ENCODE measurements at regions of chr15 and their contacts with region 1.

Region 1: GRCh38 chr15:92808978-92809879 is 90.9 kb upstream of the CHD2 start:
- DNase-seq: peak; percentile 100
- ATAC-seq: peak; percentile 90

Region 2: GRCh38 chr15:92881802-92882696 is 72.8 kb after region 1 on chr15:
- intact Hi-C with region 1: loop called (anchors 5 kb)
- DNase-seq: peak; percentile 98
- ATAC-seq: peak; percentile 96

Region 3: DNA sequence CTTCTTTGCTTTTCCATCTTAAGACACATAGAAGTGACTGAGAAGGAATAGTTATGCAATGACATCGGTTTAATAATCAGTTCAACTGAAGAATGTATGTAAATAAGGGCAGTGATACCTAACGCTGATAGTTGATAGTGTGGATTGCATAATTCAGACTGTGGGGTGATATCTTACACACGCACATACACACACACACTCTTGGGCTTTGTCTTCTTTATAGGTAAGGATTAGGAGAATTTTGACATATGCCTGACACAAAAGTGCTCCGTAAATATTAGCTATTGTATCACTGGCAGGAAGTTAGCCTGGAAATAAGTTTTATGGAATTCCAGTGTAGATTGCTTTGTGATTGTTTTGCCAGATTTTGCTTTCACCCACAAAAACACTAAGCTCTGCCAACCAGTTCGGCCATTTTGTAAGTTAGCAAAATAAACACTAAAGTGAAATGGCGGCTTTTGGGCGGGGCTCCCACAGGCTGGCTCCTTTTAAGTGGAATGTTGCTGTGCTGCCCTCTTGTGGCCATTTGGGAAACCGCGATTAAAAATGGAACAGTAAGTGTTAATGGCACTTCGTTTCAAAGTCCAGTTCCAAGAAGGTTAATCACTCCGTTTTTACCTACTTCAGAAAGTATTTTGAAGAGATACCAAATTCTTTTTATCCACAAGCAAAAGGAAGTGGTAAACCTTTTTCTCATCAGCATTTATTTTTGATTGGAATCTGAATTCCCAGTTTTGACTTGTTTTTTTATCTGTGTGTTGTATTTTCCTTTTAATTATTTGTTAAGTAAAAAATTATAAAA is 108.6 kb after region 1 on chr15:
- intact Hi-C with region 1: loop called (anchors 10 kb)
- DNase-seq: peak; percentile 92
- ATAC-seq: peak; percentile 58

Measured in left ventricle myocardium superior (tissue), 1 donor.